ENCODE measurements at regions of chr9 and their contacts with region 1.

Region 1: GRCh38 chr9:129482521-129483414 is 138.1 kb downstream of the C9orf50 start:
- DNase-seq: peak; percentile 80
- H3K4me3 ChIP-seq: peak overlapping the region; percentile 29 to 46 (median 32)
- H3K27ac ChIP-seq: peak overlapping the region; percentile 95
- H3K4me1 ChIP-seq: peaks cover 43% of the 10 kb centered on the region
- H3K27me3 ChIP-seq: no peaks in the 10 kb centered on the region
- CTCF ChIP-seq: no peak

Region 2: GRCh38 chr9:129377181-129377580 is 105.6 kb before region 1 on chr9:
- CTCF ChIA-PET with region 1: interaction called, 20 read pairs
- dilution Hi-C with region 1: no loop called
- in situ Hi-C with region 1: no loop called
- intact Hi-C with region 1: no loop called
- DNase-seq: no peak
- H3K4me3 ChIP-seq: no peak overlapping the region
- H3K27ac ChIP-seq: no peak overlapping the region
- H3K4me1 ChIP-seq: no peaks in the 10 kb centered on the region
- H3K27me3 ChIP-seq: no peaks in the 10 kb centered on the region
- CTCF ChIP-seq: no peak

Region 3: GRCh38 chr9:129394061-129394885 is 88.5 kb before region 1 on chr9:
- CTCF ChIA-PET with region 1: no interaction called
- dilution Hi-C with region 1: loop called (anchors 5 kb)
- in situ Hi-C with region 1: no loop called
- intact Hi-C with region 1: no loop called
- DNase-seq: no peak
- H3K4me3 ChIP-seq: no peak overlapping the region
- H3K27ac ChIP-seq: no peak overlapping the region
- H3K4me1 ChIP-seq: no peaks in the 10 kb centered on the region
- H3K27me3 ChIP-seq: no peaks in the 10 kb centered on the region
- CTCF ChIP-seq: no peak

Region 4: DNA sequence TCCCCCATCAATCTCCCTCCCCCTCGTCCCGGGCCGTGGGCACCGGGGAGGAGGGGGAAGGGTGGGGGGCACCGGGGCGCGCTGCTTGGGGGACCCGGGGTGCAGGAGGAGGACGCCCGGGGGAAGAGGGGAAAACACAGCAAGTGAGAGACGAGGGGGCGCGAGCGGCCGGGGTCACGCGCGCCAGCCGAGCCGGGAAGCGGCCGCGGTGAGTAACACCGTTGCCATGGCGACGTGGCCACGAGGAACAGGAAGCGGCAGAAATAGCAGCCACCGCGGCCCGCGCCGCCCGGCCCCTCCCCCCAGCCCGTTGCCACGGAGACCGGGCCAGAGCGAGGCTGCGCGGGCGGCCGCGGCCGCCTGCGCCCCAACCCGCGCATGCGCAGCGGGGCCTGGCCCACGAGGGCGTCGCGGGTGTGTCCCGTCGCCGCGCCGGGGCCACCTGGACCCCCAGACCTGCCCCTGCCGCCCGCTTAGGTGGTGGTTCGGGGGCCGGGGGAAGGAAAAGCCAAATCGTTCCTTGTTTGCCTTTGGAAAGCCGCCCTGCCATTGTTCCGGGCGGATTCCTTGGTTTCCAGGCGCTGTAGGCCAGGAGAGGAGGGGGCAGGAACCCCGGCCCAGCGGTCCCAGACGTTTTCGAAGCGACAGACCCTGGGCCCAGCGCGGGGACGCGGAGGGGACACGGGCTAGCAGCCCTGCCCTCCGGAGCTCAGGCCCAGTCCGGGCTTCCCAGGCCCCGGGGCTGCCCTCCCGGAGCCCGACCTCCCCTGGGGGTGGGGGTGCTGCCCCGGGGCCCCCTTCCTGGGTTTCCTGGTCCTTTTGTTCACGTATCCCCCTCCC is 69.0 kb before region 1 on chr9:
- CTCF ChIA-PET with region 1: no interaction called
- dilution Hi-C with region 1: no loop called
- in situ Hi-C with region 1: no loop called
- intact Hi-C with region 1: loop called (anchors 1 kb)
- DNase-seq: peak; percentile 89
- H3K4me3 ChIP-seq: peak overlapping the region; percentile 59 to 66 (median 59)
- H3K27ac ChIP-seq: peak overlapping the region; percentile 97
- H3K4me1 ChIP-seq: peaks cover 16% of the 10 kb centered on the region
- H3K27me3 ChIP-seq: no peaks in the 10 kb centered on the region
- CTCF ChIP-seq: no peak